A673 (cell line): ENCODE measurements at regions of chr7 and their contacts with region 1.

Region 1: GRCh38 chr7:5450549-5451372 is 27.1 kb upstream of the TNRC18 start:
- DNase-seq: peak; percentile 66
- H3K4me3 ChIP-seq: no peak overlapping the region
- H3K27ac ChIP-seq: no peak overlapping the region
- H3K4me1 ChIP-seq: peaks cover 8% of the 10 kb centered on the region
- H3K27me3 ChIP-seq: no peaks in the 10 kb centered on the region
- CTCF ChIP-seq: peak; percentile 77

Region 2: GRCh38 chr7:5345671-5346070 is 105.1 kb before region 1 on chr7:
- CTCF ChIA-PET with region 1: no interaction called
- POLR2A ChIA-PET with region 1: interaction called, 11 read pairs
- intact Hi-C with region 1: no loop called
- DNase-seq: no peak
- H3K4me3 ChIP-seq: no peak overlapping the region
- H3K27ac ChIP-seq: no peak overlapping the region
- H3K4me1 ChIP-seq: no peaks in the 10 kb centered on the region
- H3K27me3 ChIP-seq: no peaks in the 10 kb centered on the region
- CTCF ChIP-seq: no peak

Region 3: GRCh38 chr7:5363729-5364128 is 87.0 kb before region 1 on chr7:
- CTCF ChIA-PET with region 1: interaction called, 3 read pairs
- POLR2A ChIA-PET with region 1: no interaction called
- intact Hi-C with region 1: loop called (anchors 1 kb)
- DNase-seq: no peak
- H3K4me3 ChIP-seq: no peak overlapping the region
- H3K27ac ChIP-seq: no peak overlapping the region
- H3K4me1 ChIP-seq: peaks cover 4% of the 10 kb centered on the region
- H3K27me3 ChIP-seq: no peaks in the 10 kb centered on the region
- CTCF ChIP-seq: no peak

Region 4: GRCh38 chr7:6359021-6359420 is 908.3 kb after region 1 on chr7:
- CTCF ChIA-PET with region 1: interaction called, 10 read pairs
- POLR2A ChIA-PET with region 1: no interaction called
- intact Hi-C with region 1: no loop called
- DNase-seq: peak; percentile 39
- H3K4me3 ChIP-seq: no peak overlapping the region
- H3K27ac ChIP-seq: no peak overlapping the region
- H3K4me1 ChIP-seq: no peaks in the 10 kb centered on the region
- H3K27me3 ChIP-seq: no peaks in the 10 kb centered on the region
- CTCF ChIP-seq: no peak